Activated T-helper 1 cell treated with anti-CD3 and anti-CD28 coated beads, Interleukin-12 subunit alpha, Interleukin-12 subunit beta, Interleukin-2, Interleukin-4 antibody, amounts not matched to agents 30 ng/mL and 10 ng/mL and 1 ng/mL, durations not matched to agents 14 hours and 24 hours and 36 hours (primary cell): ENCODE measurements at regions of chr4 and their contacts with region 1.

Region 1: DNA sequence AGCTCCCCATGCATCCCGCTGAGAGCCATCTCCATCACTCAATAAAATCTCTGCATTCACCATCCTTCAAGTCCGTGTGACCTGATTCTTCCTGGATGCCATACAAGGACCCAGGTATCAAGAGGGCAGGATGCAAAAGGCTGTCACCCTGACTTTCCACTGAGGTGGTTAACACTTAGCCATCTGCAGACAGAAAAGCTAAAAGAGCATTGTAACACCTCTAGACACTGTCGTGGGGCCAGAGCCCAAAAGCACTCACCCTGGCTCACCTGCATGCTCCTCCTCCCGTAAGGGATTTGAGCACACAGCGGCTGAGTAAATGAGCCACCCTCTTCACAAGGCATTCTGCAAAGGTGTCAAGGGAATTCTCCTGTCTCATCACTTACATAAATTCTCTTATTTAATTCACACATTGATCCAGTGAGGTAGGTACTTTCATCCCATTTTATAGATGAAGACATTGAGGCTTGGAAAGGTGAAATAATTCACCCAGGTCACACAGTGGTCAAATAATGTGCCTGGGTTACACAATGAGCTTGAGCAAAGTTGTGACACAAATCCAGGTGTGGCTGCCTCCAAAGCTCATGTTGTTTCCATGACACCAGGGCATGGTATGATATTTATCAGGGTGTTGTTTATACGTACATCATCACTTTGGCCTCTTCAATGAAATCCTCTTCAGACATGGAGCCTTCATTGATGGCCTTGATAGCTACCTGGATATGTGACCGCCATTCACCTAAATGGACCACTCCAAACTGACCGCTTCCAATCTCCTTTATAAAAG is 48.0 kb downstream of the TXK start:
- DNase-seq: no peak
- H3K4me3 Mint-ChIP-seq: no peak overlapping the region
- H3K27ac Mint-ChIP-seq: no peak overlapping the region
- H3K4me1 Mint-ChIP-seq: no peaks in the 10 kb centered on the region
- H3K27me3 Mint-ChIP-seq: no peaks in the 10 kb centered on the region

Region 2: GRCh38 chr4:47668810-47669408 is 417.1 kb before region 1 on chr4:
- intact Hi-C with region 1: loop called (anchors 5 kb)
- DNase-seq: no peak
- H3K4me3 Mint-ChIP-seq: no peak overlapping the region
- H3K27ac Mint-ChIP-seq: no peak overlapping the region
- H3K4me1 Mint-ChIP-seq: no peaks in the 10 kb centered on the region
- H3K27me3 Mint-ChIP-seq: peaks cover 14% of the 10 kb centered on the region

Region 3: GRCh38 chr4:47926639-47927258 is 159.3 kb before region 1 on chr4:
- intact Hi-C with region 1: loop called (anchors 2 kb)
- DNase-seq: peak; percentile 26
- H3K4me3 Mint-ChIP-seq: no peak overlapping the region
- H3K27ac Mint-ChIP-seq: no peak overlapping the region
- H3K4me1 Mint-ChIP-seq: peaks cover 8% of the 10 kb centered on the region
- H3K27me3 Mint-ChIP-seq: peaks cover 24% of the 10 kb centered on the region

Region 4: GRCh38 chr4:48008021-48008596 is 77.9 kb before region 1 on chr4:
- intact Hi-C with region 1: loop called (anchors 1 kb)
- DNase-seq: no peak
- H3K4me3 Mint-ChIP-seq: no peak overlapping the region
- H3K27ac Mint-ChIP-seq: no peak overlapping the region
- H3K4me1 Mint-ChIP-seq: no peaks in the 10 kb centered on the region
- H3K27me3 Mint-ChIP-seq: no peaks in the 10 kb centered on the region

Region 5: GRCh38 chr4:48033825-48034413 is 52.1 kb before region 1 on chr4:
- intact Hi-C with region 1: loop called (anchors 1 kb)
- DNase-seq: peak; percentile 28
- H3K4me3 Mint-ChIP-seq: no peak overlapping the region
- H3K27ac Mint-ChIP-seq: no peak overlapping the region
- H3K4me1 Mint-ChIP-seq: peaks cover 33% of the 10 kb centered on the region
- H3K27me3 Mint-ChIP-seq: peaks cover 4% of the 10 kb centered on the region

Region 6: DNA sequence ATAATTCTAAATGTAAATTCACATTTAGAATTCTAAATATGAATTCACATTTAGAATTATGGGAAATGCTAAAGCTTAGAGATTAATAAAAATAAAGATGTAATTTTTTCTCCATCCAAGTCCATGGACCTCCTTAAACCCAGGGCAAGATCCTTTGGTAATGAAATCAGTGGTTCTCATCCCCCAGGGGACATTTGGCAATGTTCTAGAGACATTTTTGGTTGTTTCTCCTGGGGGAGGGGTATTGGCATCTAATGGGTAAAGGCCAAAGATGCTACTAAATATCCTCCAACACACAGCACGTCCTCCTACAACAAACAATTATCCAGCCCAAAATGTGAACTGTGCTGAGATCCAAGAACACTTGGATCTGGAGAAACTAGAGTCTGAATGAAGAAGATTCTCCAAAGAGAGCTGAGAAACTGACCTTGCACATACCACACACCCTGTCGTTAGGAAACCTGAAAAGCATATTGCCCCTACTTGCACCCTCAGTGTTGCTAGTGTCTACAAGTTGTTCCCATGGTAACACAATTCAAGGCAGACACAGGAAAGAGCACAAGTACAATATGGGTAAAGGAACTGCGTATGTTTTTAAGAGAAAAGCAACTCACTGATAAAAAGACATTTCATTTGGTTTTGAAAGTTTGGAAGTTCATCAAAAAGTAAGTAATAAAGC is 27.6 kb before region 1 on chr4:
- intact Hi-C with region 1: no loop called
- DNase-seq: no peak
- H3K4me3 Mint-ChIP-seq: no peak overlapping the region
- H3K27ac Mint-ChIP-seq: no peak overlapping the region
- H3K4me1 Mint-ChIP-seq: no peaks in the 10 kb centered on the region
- H3K27me3 Mint-ChIP-seq: no peaks in the 10 kb centered on the region

Region 7: DNA sequence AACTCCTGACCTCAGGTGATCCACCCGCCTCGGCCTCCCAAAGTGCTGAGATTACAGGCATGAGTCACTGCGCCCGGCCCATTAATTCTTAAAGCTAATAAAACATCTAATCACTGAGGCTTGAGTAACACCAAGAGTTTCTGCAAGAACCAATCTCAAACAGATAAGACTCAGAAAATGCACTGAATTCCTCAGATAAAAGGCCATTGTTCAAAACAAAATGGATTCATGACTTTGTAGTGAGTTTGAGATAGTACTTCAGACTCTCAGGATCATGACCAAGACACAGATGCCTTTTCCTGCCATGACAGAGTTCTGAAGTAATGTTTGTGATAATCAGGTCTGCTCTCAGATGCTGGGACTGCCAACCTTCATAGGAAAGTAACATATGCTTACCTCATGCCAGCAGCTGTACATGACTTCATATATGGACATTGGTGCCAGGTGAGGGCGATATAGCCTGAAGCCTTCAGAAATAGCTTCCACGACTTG is 14.8 kb before region 1 on chr4:
- intact Hi-C with region 1: no loop called
- DNase-seq: no peak
- H3K4me3 Mint-ChIP-seq: no peak overlapping the region
- H3K27ac Mint-ChIP-seq: no peak overlapping the region
- H3K4me1 Mint-ChIP-seq: no peaks in the 10 kb centered on the region
- H3K27me3 Mint-ChIP-seq: no peaks in the 10 kb centered on the region

Region 8: DNA sequence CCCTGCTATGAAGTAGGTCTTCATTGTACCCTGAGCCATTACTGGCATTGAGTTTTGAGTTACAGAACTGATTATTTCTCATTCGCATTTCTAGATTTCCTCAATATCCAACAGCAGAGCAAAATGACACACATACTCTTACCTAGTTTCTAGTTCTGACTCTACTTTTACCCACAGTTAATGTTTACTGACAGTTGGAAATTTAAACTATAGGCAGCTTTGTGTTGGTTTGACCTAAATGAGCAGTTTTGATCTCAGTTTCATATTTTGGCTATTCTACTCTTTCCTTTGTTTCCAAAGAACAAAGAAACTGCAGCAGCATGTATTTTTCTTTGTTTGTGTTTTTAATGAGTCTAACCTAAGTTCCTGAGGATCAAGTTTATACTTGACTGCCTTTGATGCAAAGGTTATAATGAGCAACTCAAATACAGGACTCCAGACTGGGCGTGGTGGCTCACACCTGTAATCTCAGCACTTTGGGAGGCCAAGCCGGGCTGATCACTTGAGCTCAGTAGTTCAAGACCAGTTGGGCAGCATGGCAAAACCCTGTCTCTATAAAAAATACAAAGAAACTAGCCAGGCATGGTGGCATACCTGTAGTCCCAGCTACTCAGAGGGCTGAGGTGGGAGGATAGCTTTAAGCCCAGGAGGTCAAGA is 17.6 kb after region 1 on chr4:
- intact Hi-C with region 1: loop called (anchors 2 kb)
- DNase-seq: no peak
- H3K4me3 Mint-ChIP-seq: no peak overlapping the region
- H3K27ac Mint-ChIP-seq: peak overlapping the region; percentile 63
- H3K4me1 Mint-ChIP-seq: peaks cover 24% of the 10 kb centered on the region
- H3K27me3 Mint-ChIP-seq: no peaks in the 10 kb centered on the region